HepG2 (cell line): ENCODE measurements at regions of chr12 and their contacts with region 1.

Region 1: DNA sequence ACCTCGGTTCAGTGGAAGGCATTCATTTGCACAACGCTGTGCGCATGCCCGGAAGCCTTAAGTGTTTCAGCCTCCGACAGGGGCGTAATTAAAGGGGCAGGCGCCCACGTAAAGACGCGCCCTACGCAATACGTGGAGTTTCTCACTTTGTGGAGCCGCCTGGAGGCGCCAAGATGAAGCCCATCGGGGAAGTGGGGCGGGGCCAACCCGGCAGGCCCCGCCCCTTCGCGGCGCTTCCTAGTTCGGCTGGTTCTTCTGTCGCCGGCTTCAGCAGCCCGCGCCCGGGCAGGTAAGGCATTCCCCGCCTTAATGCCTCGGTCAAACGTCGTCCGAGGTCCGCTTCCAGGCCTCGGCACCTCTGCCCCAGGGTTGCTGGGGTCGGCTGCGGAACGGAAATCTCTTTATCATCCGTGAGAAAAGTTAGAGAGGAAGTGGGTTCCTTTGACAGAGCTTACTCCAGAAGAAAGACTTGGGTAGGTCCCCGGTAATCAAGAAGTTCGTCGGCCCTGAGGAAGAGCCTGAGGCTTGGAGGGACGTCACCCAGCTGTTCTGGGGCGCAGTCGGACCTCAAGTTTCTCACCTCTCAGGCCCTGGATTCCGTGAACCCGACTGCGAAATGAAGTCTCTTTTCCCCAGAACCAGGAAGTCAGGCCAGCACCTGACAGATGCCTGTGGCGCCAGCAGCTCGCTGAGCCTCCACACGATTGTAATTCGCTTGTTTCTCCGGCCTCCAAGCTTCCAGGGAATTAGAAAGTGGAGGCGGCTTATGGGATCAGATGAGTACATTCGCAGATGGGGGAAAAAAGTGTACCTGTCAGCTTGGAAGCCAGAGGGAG is at the starts of genes IRAK4 and PUS7L:
- DNase-seq: peak; percentile 97
- ATAC-seq: peak; percentile 93
- H3K4me3 ChIP-seq: peak within 1 kb of the TSS; percentile 70 to 93 (median 84)
- H3K27ac ChIP-seq: peak within 1 kb of the TSS; percentile 87
- H3K4me1 ChIP-seq: peaks cover 62% of the 10 kb centered on the region
- H3K27me3 ChIP-seq: no peaks in the 10 kb centered on the region; a peak in 1 of 5 replicates
- CTCF ChIP-seq: peak; percentile 78
- EP300 ChIP-seq: no peak
- POLR2A ChIP-seq: peak; percentile 80 to 83
- RAD21 ChIP-seq: no peak
- total RNA-seq, gene IRAK4: 7.1 and 8.4 TPM in 2 replicates
- total RNA-seq, gene PUS7L: 37.6 and 92.7 TPM in 2 replicates

Region 2: GRCh38 chr12:43655586-43655985 is 103.4 kb before region 1 on chr12:
- CTCF ChIA-PET with region 1: no interaction called
- POLR2A ChIA-PET with region 1: no interaction called
- in situ Hi-C with region 1: no loop called
- intact Hi-C with region 1: no loop called
- DNase-seq: no peak
- ATAC-seq: no peak
- H3K4me3 ChIP-seq: no peak overlapping the region
- H3K27ac ChIP-seq: no peak overlapping the region
- H3K4me1 ChIP-seq: no peaks in the 10 kb centered on the region
- H3K27me3 ChIP-seq: no peaks in the 10 kb centered on the region
- CTCF ChIP-seq: no peak
- EP300 ChIP-seq: no peak
- POLR2A ChIP-seq: no peak
- RAD21 ChIP-seq: no peak

Region 3: GRCh38 chr12:43805860-43806736 is 47.2 kb after region 1 on chr12 and contains the start of gene TWF1:
- CTCF ChIA-PET with region 1: no interaction called
- POLR2A ChIA-PET with region 1: interaction called, 14 read pairs
- in situ Hi-C with region 1: no loop called
- intact Hi-C with region 1: loop called (anchors 5 kb)
- DNase-seq: peak; percentile 62
- ATAC-seq: peak; percentile 97
- H3K4me3 ChIP-seq: peak within 1 kb of the TSS; percentile 97 to 100 (median 98)
- H3K27ac ChIP-seq: peak within 1 kb of the TSS; percentile 96
- H3K4me1 ChIP-seq: peaks cover 26% of the 10 kb centered on the region
- H3K27me3 ChIP-seq: no peaks in the 10 kb centered on the region
- CTCF ChIP-seq: no peak; the same call in 1 of the 2 replicates
- EP300 ChIP-seq: no peak
- POLR2A ChIP-seq: peak; percentile 67 to 81
- RAD21 ChIP-seq: peak; percentile 62
- total RNA-seq, gene TWF1: 85.5 and 148 TPM in 2 replicates

Region 4: GRCh38 chr12:43992856-43993255 is 233.9 kb after region 1 on chr12:
- CTCF ChIA-PET with region 1: no interaction called
- POLR2A ChIA-PET with region 1: no interaction called
- in situ Hi-C with region 1: no loop called
- intact Hi-C with region 1: loop called (anchors 10 kb)
- DNase-seq: no peak
- ATAC-seq: no peak
- H3K4me3 ChIP-seq: no peak overlapping the region
- H3K27ac ChIP-seq: no peak overlapping the region
- H3K4me1 ChIP-seq: peaks cover 14% of the 10 kb centered on the region
- H3K27me3 ChIP-seq: no peaks in the 10 kb centered on the region
- CTCF ChIP-seq: no peak
- EP300 ChIP-seq: no peak
- POLR2A ChIP-seq: no peak
- RAD21 ChIP-seq: no peak